Activated CD8-positive, alpha-beta T cell treated with anti-CD3 and anti-CD28 coated beads for 36 hours (primary cell): ENCODE measurements at regions of chr6 and their contacts with region 1.

Region 1: GRCh38 chr6:39309942-39310531 is 4.2 kb downstream of the KCNK17 start:
- DNase-seq: peak; percentile 68
- ATAC-seq: peak; percentile 83
- H3K4me3 Mint-ChIP-seq: no peak overlapping the region
- H3K27ac Mint-ChIP-seq: no peak overlapping the region
- H3K4me1 Mint-ChIP-seq: peaks cover 2% of the 10 kb centered on the region
- H3K27me3 Mint-ChIP-seq: peaks cover 27% of the 10 kb centered on the region
- CTCF ChIP-seq: peak; percentile 77

Region 2: GRCh38 chr6:38973178-38974054 is 336.6 kb before region 1 on chr6:
- CTCF ChIA-PET with region 1: interaction called, 39 read pairs
- POLR2A ChIA-PET with region 1: no interaction called
- intact Hi-C with region 1: no loop called
- DNase-seq: peak; percentile 51
- ATAC-seq: peak; percentile 97
- H3K4me3 Mint-ChIP-seq: no peak overlapping the region
- H3K27ac Mint-ChIP-seq: no peak overlapping the region
- H3K4me1 Mint-ChIP-seq: peaks cover 2% of the 10 kb centered on the region
- H3K27me3 Mint-ChIP-seq: peaks cover 13% of the 10 kb centered on the region
- CTCF ChIP-seq: peak; percentile 68